Naive thymus-derived CD4-positive, alpha-beta T cell (primary cell): ENCODE measurements at regions of chr20 and their contacts with region 1.

Region 1: GRCh38 chr20:25750765-25751696 is 54.4 kb upstream of the ZNF337 start:
- DNase-seq: peak; percentile 28 to 63 (median 43)
- ATAC-seq: peak; percentile 96
- H3K4me3 ChIP-seq: peak overlapping the region; percentile 68
- H3K4me3 Mint-ChIP-seq: peak overlapping the region; percentile 83 to 93 (median 86)
- H3K27ac ChIP-seq: peak overlapping the region; percentile 59
- H3K27ac Mint-ChIP-seq: peak overlapping the region; percentile 19 to 95 (median 79)
- H3K4me1 ChIP-seq: peaks cover 0 to 4% of the 10 kb centered on the region in 2 donors
- H3K4me1 Mint-ChIP-seq: peaks cover 7 to 20% (median 14%) of the 10 kb centered on the region in 7 donors
- H3K27me3 ChIP-seq: no peaks in the 10 kb centered on the region
- H3K27me3 Mint-ChIP-seq: no peaks in the 10 kb centered on the region

Region 2: GRCh38 chr20:25584905-25585704 is 165.9 kb before region 1 on chr20 and contains the start of gene NINL:
- CTCF ChIA-PET with region 1: no interaction called
- POLR2A ChIA-PET with region 1: interaction called, 3 read pairs
- intact Hi-C with region 1: loop called in 1 of 2 experiments (anchors 1 kb)
- DNase-seq: peak; percentile 6 to 64 (median 47)
- ATAC-seq: peak; percentile 84
- H3K4me3 ChIP-seq: peak within 1 kb of the TSS; percentile 50
- H3K4me3 Mint-ChIP-seq: peak within 1 kb of the TSS; percentile 68 to 91 (median 80)
- H3K27ac ChIP-seq: peak within 1 kb of the TSS; percentile 33
- H3K27ac Mint-ChIP-seq: peak within 1 kb of the TSS in 8 of 9 donors; percentile 9 to 86 (median 62)
- H3K4me1 ChIP-seq: no peaks in the 10 kb centered on the region
- H3K4me1 Mint-ChIP-seq: peaks cover 0 to 19% (median 8%) of the 10 kb centered on the region in 7 donors
- H3K27me3 ChIP-seq: no peaks in the 10 kb centered on the region
- H3K27me3 Mint-ChIP-seq: peaks cover 0 to 21% (median 15%) of the 10 kb centered on the region in 5 donors
- total RNA-seq, gene NINL: 1.4 to 4.2 (median 3.0) TPM

Region 3: DNA sequence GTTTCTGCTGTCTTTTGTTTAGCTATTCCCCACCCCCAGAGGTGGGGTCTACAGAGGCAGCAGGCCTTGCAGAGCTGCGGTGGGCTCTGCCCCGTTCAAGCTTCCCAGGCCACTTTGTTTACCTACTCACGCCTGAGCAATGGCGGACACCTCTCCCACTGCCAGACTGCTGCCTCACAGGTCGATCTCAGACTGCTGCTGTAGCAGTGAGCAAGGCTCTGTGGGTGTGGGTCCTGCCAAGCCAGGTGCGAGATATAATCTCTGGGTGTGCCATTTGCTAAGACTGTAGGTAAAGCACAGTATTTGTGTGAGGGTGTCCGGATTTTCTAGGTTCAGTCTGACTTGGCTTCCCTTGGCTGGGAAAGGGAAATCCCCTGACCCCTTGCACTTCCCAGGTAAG is 30.7 kb before region 1 on chr20:
- CTCF ChIA-PET with region 1: no interaction called
- POLR2A ChIA-PET with region 1: interaction called, 4 read pairs
- intact Hi-C with region 1: loop called in 1 of 2 experiments (anchors 1 kb)
- DNase-seq: no peak
- ATAC-seq: no peak
- H3K4me3 ChIP-seq: no peak overlapping the region
- H3K4me3 Mint-ChIP-seq: no peak overlapping the region
- H3K27ac ChIP-seq: no peak overlapping the region
- H3K27ac Mint-ChIP-seq: peak overlapping the region in 4 of 9 donors; percentile 84 to 93 (median 92)
- H3K4me1 ChIP-seq: peaks cover 3 to 14% of the 10 kb centered on the region in 2 donors
- H3K4me1 Mint-ChIP-seq: peaks cover 4 to 37% (median 22%) of the 10 kb centered on the region in 7 donors
- H3K27me3 ChIP-seq: no peaks in the 10 kb centered on the region
- H3K27me3 Mint-ChIP-seq: no peaks in the 10 kb centered on the region